Posterior cingulate gyrus (tissue), 11 donors: ENCODE measurements at regions of chr5 and their contacts with region 1.

Region 1: DNA sequence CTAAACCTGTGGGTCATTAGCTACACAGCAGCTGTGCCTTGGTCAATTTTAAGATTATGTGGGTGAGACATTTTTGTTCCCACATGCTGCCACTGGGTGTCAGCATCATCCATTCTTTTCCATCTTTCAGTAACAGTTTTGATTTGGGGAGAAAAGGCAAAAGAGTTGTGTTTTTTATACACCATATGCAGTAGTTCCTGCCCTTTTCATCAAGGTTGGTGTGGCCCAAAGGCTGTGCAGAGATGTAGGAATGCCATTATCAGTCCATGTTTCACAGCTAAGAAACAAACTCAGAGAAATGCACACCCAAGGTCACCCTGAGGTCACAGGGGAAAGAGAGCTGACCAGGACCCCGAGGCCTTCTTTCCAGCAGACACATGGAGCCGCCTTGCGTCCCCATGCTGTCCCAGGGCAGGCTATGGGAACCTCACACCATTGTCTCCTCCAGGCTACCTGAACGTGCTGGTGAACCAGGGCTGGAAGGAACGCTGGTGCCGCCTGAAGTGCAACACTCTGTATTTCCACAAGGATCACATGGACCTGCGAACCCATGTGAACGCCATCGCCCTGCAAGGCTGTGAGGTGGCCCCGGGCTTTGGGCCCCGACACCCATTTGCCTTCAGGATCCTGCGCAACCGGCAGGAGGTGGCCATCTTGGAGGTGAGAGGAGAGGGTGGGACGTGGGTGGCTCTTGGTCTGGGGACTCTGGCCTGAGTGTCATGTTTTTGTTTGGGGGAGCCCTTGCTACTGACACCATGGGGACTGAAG is 27.8 kb upstream of the GRPEL2 start:
- DNase-seq: peak in 4 of 10 donors; percentile 20 to 33 (median 25)

Region 2: DNA sequence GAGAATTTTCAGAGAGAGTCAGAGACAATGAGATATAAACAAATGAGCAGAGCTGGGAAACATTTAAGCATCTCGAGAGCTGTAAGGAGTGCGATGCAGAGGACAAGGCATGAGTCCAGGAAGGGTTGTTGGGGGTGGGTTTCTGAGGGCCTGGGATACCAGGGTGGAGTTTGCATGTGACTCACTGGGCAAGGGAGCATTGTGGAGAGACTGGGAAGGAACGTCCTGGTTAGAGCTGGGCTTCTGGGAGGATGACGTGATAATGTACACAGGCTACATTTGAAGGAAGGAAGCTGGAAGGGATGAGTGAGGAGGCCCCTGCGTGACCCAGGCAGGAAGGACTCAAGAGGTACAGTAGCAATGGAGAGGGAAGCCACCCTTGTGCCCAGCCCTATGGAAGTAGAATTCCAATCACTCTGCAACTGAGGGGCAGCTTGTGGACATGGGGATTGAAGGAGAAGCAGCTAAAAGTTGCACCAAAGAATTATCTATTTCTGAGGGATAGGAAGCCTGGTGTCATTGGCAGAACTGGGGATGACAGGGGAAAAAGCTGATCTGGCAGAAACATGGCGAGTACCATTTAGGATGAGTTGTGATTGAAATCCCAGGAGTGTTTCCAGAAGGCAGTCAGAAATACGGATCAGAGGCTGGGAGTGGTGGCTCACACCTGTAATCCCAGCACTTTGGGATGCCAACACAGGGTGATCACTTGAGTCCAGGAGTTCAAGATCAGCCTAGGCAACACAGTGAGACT is 105.1 kb before region 1 on chr5:
- intact Hi-C with region 1: no loop called
- DNase-seq: no peak

Region 3: GRCh38 chr5:149371296-149371962 is 54.0 kb after region 1 on chr5:
- intact Hi-C with region 1: loop called (anchors 2 kb)
- DNase-seq: peak in 6 of 10 donors; percentile 46 to 92 (median 58)

Region 4: DNA sequence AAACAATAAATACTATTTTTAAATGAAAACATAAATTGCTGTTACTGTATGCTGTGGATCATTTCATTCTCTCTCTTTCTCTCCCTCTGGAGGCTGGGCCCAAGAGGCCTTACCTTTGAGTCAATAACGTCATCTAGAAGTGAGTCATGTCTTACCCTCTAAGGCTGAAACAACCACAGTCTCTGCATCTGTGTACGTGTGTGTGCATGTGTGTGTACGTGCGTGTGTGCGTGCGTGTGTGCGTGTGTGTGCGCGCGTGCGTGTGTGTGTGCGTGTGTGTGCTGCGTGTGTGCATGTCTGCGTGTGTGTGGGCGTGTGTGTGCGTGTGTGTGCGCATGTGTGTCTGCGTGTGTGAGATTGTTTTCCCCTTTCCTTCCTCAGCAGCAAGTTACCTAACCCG is 75.3 kb after region 1 on chr5:
- intact Hi-C with region 1: no loop called
- DNase-seq: peak in 1 of 10 donors; percentile 26

Region 5: GRCh38 chr5:149434162-149435014 is 116.9 kb after region 1 on chr5:
- intact Hi-C with region 1: loop called (anchors 5 kb)
- DNase-seq: peak in 5 of 10 donors; percentile 49 to 64 (median 59)

Region 6: GRCh38 chr5:149517461-149518122 is 200.1 kb after region 1 on chr5:
- intact Hi-C with region 1: no loop called
- DNase-seq: peak in 6 of 10 donors; percentile 19 to 84 (median 35)

Region 7: DNA sequence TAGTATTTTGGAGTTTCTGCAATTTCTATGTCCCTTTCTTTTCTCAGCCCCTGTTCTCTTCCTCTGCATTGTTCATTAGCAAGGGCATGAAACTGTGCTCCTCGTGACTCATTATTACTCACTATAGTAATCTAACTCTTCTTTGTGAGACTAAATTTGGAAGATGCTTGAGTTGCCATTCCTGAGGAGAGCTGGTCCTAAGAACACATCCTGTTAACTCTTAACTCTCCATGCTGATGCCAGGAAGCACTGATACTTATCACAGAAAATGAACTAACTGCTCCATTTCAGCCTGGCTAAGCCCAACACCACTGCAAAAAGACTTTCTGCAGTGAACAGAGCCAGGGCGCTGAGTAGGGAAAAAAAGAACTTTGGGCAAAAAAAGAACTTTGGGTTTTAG is 244.4 kb after region 1 on chr5:
- intact Hi-C with region 1: loop called (anchors 5 kb)
- DNase-seq: no peak